ENCODE measurements at regions of chr3 and their contacts with region 1.

Region 1: DNA sequence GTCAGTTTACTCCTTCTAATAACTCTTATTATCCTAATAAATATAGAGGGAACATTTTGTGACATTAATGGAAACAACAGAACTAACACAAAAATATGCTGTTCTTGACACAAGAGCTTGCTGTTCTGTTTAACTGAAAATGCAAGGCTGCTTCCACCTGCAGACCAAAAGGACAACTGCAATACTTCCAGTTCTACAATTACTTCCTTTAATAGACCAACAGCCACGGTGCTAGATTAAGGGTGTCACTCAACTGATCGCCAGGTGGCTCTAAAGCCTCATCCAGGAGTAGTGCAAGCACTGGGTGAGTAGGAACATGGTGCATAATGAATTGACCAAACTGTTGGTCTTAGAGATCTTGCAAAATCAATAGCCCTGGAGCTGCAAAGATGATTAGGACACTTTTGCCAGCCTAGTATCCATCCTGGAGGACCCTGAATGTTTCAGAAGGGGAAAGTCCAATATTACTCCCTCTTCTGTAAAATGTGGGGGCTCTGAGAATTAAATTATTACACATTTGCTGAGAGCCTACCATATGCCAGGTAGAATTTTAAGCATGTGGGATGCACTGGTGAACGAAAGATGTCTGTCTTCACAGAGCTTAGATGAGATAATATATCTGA is 3.6 kb upstream of the CLDN16 start:
- DNase-seq: peak; percentile 88
- H3K4me3 ChIP-seq: no peak overlapping the region
- H3K27ac ChIP-seq: peak overlapping the region; percentile 36
- H3K4me1 ChIP-seq: peaks cover 81% of the 10 kb centered on the region
- H3K27me3 ChIP-seq: no peaks in the 10 kb centered on the region
- CTCF ChIP-seq: peak; percentile 80

Region 2: GRCh38 chr3:190224863-190225692 is 159.3 kb before region 1 on chr3:
- CTCF ChIA-PET with region 1: no interaction called
- POLR2A ChIA-PET with region 1: no interaction called
- intact Hi-C with region 1: loop called (anchors 2 kb)
- DNase-seq: peak; percentile 79
- H3K4me3 ChIP-seq: no peak overlapping the region
- H3K27ac ChIP-seq: peak overlapping the region; percentile 7
- H3K4me1 ChIP-seq: peaks cover 27% of the 10 kb centered on the region
- H3K27me3 ChIP-seq: no peaks in the 10 kb centered on the region
- CTCF ChIP-seq: peak; percentile 61